Activated CD8-positive, alpha-beta T cell treated with anti-CD3 and anti-CD28 coated beads, Interleukin-2, amount 10 ng/mL, durations not matched to agents 7 days and 5 days (primary cell): ENCODE measurements at regions of chr19 and their contacts with region 1.

Region 1: DNA sequence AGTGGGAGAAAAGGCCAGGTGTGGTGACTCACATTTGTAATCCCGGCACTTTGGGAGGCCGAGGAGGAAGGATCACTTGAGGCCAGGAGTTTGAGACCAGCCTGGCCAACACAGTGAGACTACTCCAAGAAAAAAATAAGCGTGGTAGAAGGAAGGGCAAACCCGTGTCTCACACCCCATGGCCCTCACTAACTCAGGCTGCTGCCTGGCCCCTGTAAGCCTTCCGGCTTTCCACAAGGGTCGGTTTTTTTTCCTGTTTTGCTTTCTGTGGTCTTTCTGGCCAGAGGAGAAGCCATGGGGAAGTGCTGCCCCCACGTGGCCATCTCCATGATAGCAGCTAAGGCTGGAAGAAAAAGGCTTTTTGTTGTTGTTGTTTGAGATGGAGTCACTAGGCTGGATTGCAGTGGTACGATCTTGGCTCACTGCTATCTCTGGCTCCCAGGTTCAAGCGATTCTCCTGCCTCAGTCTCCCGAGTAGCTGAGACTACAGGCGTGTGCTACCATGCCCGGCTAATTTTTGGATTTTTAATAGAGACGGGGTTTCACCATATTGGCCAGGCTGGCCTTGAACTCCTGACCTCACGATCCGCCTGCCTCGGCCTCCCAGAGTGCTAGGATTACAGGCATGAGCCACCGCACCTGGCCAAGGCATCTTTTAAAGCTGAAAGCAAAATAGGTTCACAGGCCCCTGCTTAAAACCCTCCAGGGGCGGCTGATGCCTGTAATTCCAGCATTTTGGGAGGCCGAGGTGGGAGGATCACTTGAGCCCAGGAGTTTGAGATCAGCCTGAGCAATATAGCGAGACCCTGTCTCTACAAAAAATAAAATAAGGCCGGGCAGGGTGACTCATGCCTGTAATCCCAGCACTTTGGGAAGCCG is 7.5 kb upstream of the ARHGEF18 start:
- DNase-seq: peak; percentile 88
- ATAC-seq: peak; percentile 24
- H3K4me3 Mint-ChIP-seq: no peak overlapping the region
- H3K27ac Mint-ChIP-seq: peak overlapping the region; percentile 61
- H3K4me1 Mint-ChIP-seq: peaks cover 53% of the 10 kb centered on the region
- H3K27me3 Mint-ChIP-seq: no peaks in the 10 kb centered on the region

Region 2: GRCh38 chr19:7149956-7150705 is 191.1 kb before region 1 on chr19:
- CTCF ChIA-PET with region 1: interaction called, 17 read pairs
- POLR2A ChIA-PET with region 1: no interaction called
- DNase-seq: no peak
- ATAC-seq: no peak
- H3K4me3 Mint-ChIP-seq: no peak overlapping the region
- H3K27ac Mint-ChIP-seq: no peak overlapping the region
- H3K4me1 Mint-ChIP-seq: no peaks in the 10 kb centered on the region
- H3K27me3 Mint-ChIP-seq: no peaks in the 10 kb centered on the region

Region 3: GRCh38 chr19:7326105-7326877 is 14.9 kb before region 1 on chr19:
- CTCF ChIA-PET with region 1: interaction called, 24 read pairs
- POLR2A ChIA-PET with region 1: no interaction called
- DNase-seq: peak; percentile 56
- ATAC-seq: no peak
- H3K4me3 Mint-ChIP-seq: no peak overlapping the region
- H3K27ac Mint-ChIP-seq: no peak overlapping the region
- H3K4me1 Mint-ChIP-seq: no peaks in the 10 kb centered on the region
- H3K27me3 Mint-ChIP-seq: peaks cover 2% of the 10 kb centered on the region

Region 4: GRCh38 chr19:7386308-7386707 is 45.1 kb after region 1 on chr19:
- CTCF ChIA-PET with region 1: no interaction called
- POLR2A ChIA-PET with region 1: no interaction called
- DNase-seq: no peak
- ATAC-seq: no peak
- H3K4me3 Mint-ChIP-seq: no peak overlapping the region
- H3K27ac Mint-ChIP-seq: no peak overlapping the region
- H3K4me1 Mint-ChIP-seq: no peaks in the 10 kb centered on the region
- H3K27me3 Mint-ChIP-seq: no peaks in the 10 kb centered on the region